Naive thymus-derived CD4-positive, alpha-beta T cell (primary cell): ENCODE measurements at regions of chr12 and their contacts with region 1.

Region 1: DNA sequence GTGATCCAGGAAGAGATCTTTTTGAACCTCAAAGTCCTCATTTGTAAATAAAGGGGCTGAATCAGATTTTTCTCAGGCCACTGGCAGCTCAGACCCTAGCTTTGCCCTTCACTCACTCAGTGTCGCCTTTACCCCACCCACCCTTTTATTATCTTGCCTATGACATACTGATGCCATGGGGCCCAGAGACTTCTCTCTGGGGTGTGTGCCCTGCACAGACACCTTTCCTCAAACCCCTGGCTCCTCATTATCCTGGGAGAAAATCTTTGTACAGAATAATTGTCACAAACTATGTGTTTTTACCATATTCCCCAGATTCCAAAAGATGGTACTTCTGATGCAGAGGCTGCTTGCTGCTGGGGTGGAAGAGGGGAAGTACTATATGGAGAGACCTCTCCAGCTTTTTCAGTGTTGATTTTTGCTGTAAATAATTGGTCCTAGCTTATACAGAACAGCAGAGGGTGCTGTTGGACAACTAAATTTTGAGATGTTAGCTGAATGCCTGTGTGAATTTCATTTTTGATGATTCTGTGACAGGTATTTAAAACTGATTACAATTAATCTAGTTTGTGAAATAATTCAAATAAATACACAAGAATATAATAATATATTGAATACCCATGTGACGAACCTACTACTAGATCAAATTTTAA is 53.9 kb upstream of the DCD start:
- DNase-seq: peak in 7 of 9 donors; percentile 16 to 67 (median 56)
- ATAC-seq: peak; percentile 81
- H3K4me3 ChIP-seq: no peak overlapping the region
- H3K4me3 Mint-ChIP-seq: no peak overlapping the region
- H3K27ac ChIP-seq: no peak overlapping the region
- H3K27ac Mint-ChIP-seq: no peak overlapping the region
- H3K4me1 ChIP-seq: no peaks in the 10 kb centered on the region
- H3K4me1 Mint-ChIP-seq: no peaks in the 10 kb centered on the region
- H3K27me3 ChIP-seq: no peaks in the 10 kb centered on the region
- H3K27me3 Mint-ChIP-seq: peaks cover 0 to 27% (median 6%) of the 10 kb centered on the region in 5 donors

Region 2: DNA sequence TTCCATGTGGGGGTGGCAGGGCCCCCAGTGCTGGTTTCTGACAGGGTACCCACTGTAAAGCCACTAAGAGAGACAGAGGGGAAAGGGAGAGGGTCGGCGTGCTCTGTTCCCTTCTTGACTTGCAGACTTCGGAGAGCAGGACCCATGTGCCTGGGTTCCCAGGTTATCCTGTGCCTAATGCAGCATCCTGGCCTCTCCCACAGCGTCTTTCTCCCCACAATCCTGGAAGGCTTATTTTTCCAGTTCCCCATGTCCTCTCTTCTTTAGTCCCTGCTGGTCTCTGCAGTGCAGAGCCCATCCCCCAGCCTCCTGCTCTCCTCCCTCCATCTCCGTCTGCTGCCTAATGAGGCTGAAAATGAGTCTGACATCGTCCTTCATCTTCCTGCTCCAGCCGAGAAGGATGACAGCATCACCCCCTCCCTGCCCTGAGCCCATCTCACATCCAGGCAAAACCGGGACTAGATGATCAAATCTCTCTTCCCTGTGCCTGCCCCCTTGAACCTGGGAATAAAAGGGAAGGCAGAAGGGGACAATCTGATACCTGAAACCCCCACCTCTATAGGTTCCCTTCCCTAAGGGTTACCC is 989.9 kb before region 1 on chr12:
- CTCF ChIA-PET with region 1: no interaction called
- POLR2A ChIA-PET with region 1: no interaction called
- intact Hi-C with region 1: no loop called
- DNase-seq: no peak
- ATAC-seq: no peak
- H3K4me3 ChIP-seq: no peak overlapping the region
- H3K4me3 Mint-ChIP-seq: no peak overlapping the region
- H3K27ac ChIP-seq: no peak overlapping the region
- H3K27ac Mint-ChIP-seq: peak overlapping the region in 2 of 9 donors; percentile 17 to 71
- H3K4me1 ChIP-seq: no peaks in the 10 kb centered on the region
- H3K4me1 Mint-ChIP-seq: peaks cover 0 to 2% (median 0%) of the 10 kb centered on the region in 7 donors
- H3K27me3 ChIP-seq: no peaks in the 10 kb centered on the region
- H3K27me3 Mint-ChIP-seq: peaks cover 0 to 20% (median 0%) of the 10 kb centered on the region in 5 donors

Region 3: GRCh38 chr12:53917126-53917653 is 784.9 kb before region 1 on chr12:
- CTCF ChIA-PET with region 1: no interaction called
- POLR2A ChIA-PET with region 1: no interaction called
- intact Hi-C with region 1: loop called in 1 of 2 experiments (anchors 5 kb)
- DNase-seq: no peak
- ATAC-seq: no peak
- H3K4me3 ChIP-seq: no peak overlapping the region
- H3K4me3 Mint-ChIP-seq: no peak overlapping the region
- H3K27ac ChIP-seq: no peak overlapping the region
- H3K27ac Mint-ChIP-seq: no peak overlapping the region
- H3K4me1 ChIP-seq: no peaks in the 10 kb centered on the region
- H3K4me1 Mint-ChIP-seq: no peaks in the 10 kb centered on the region
- H3K27me3 ChIP-seq: peaks cover 0 to 30% of the 10 kb centered on the region in 2 donors
- H3K27me3 Mint-ChIP-seq: peaks cover 66 to 83% (median 78%) of the 10 kb centered on the region in 5 donors

Region 4: DNA sequence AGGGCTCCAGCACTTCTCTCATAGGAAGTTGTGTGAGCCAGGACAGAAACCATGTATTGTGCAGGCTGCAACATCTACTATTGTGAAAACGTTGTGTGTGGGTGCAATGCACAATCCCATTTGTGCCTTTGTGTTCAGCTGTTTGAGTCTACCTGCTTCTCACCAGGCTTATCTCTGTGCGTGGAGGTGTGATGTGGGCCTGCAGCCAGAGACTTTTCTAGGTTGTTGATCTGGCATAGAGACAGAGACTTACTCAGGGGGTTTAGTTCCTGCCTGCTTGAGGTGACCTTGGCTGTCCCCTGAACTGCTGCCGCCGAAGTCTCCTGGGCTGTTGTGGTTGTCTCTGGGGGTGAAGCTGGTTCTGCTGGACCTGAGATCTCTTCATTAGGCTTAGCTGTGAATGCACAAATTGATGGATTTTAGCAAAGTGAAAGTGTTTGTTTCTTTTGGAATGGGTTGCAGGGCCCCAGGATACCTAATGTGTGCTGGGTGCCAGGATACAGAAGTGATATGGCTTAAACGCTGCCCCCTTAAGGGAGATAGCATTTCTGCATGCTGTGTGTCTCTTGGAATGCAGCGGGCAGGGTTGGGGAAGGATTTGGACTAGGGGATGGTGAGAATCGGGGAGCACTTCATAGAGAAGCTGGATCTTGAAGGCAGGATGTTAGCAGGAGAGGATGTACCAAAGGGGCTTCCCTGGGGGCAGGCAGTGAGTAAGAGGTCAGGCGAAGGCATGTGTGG is 69.9 kb before region 1 on chr12:
- CTCF ChIA-PET with region 1: no interaction called
- POLR2A ChIA-PET with region 1: no interaction called
- intact Hi-C with region 1: no loop called
- DNase-seq: no peak
- ATAC-seq: no peak
- H3K4me3 ChIP-seq: no peak overlapping the region
- H3K4me3 Mint-ChIP-seq: no peak overlapping the region
- H3K27ac ChIP-seq: no peak overlapping the region
- H3K27ac Mint-ChIP-seq: no peak overlapping the region
- H3K4me1 ChIP-seq: no peaks in the 10 kb centered on the region
- H3K4me1 Mint-ChIP-seq: no peaks in the 10 kb centered on the region
- H3K27me3 ChIP-seq: no peaks in the 10 kb centered on the region
- H3K27me3 Mint-ChIP-seq: peaks cover 9 to 39% (median 24%) of the 10 kb centered on the region in 5 donors

Region 5: GRCh38 chr12:54853995-54854566 is 152.0 kb after region 1 on chr12 and contains the start of gene MUCL1:
- CTCF ChIA-PET with region 1: interaction called, 4 read pairs
- POLR2A ChIA-PET with region 1: no interaction called
- intact Hi-C with region 1: loop called (anchors 1 kb)
- DNase-seq: peak; percentile 21 to 79 (median 73)
- ATAC-seq: peak; percentile 99
- H3K4me3 ChIP-seq: no peak within 1 kb of the TSS
- H3K4me3 Mint-ChIP-seq: no peak within 1 kb of the TSS
- H3K27ac ChIP-seq: no peak within 1 kb of the TSS
- H3K27ac Mint-ChIP-seq: peak within 1 kb of the TSS in 2 of 9 donors; percentile 44 to 70
- H3K4me1 ChIP-seq: no peaks in the 10 kb centered on the region
- H3K4me1 Mint-ChIP-seq: peaks cover 0 to 12% (median 5%) of the 10 kb centered on the region in 7 donors
- H3K27me3 ChIP-seq: no peaks in the 10 kb centered on the region
- H3K27me3 Mint-ChIP-seq: peaks cover 0 to 4% (median 0%) of the 10 kb centered on the region in 5 donors
- total RNA-seq, gene MUCL1: not detected

Region 6: GRCh38 chr12:55001198-55001868 is 299.3 kb after region 1 on chr12:
- CTCF ChIA-PET with region 1: interaction called, 16 read pairs
- POLR2A ChIA-PET with region 1: no interaction called
- intact Hi-C with region 1: no loop called
- DNase-seq: no peak
- ATAC-seq: peak; percentile 59
- H3K4me3 ChIP-seq: no peak overlapping the region
- H3K4me3 Mint-ChIP-seq: peak overlapping the region in 8 of 10 donors; percentile 1 to 81 (median 59)
- H3K27ac ChIP-seq: peak overlapping the region; percentile 11
- H3K27ac Mint-ChIP-seq: peak overlapping the region in 8 of 9 donors; percentile 53 to 83 (median 72)
- H3K4me1 ChIP-seq: peaks cover 0 to 16% of the 10 kb centered on the region in 2 donors
- H3K4me1 Mint-ChIP-seq: peaks cover 8 to 33% (median 21%) of the 10 kb centered on the region in 7 donors
- H3K27me3 ChIP-seq: no peaks in the 10 kb centered on the region
- H3K27me3 Mint-ChIP-seq: peaks cover 0 to 5% (median 0%) of the 10 kb centered on the region in 5 donors

Region 7: DNA sequence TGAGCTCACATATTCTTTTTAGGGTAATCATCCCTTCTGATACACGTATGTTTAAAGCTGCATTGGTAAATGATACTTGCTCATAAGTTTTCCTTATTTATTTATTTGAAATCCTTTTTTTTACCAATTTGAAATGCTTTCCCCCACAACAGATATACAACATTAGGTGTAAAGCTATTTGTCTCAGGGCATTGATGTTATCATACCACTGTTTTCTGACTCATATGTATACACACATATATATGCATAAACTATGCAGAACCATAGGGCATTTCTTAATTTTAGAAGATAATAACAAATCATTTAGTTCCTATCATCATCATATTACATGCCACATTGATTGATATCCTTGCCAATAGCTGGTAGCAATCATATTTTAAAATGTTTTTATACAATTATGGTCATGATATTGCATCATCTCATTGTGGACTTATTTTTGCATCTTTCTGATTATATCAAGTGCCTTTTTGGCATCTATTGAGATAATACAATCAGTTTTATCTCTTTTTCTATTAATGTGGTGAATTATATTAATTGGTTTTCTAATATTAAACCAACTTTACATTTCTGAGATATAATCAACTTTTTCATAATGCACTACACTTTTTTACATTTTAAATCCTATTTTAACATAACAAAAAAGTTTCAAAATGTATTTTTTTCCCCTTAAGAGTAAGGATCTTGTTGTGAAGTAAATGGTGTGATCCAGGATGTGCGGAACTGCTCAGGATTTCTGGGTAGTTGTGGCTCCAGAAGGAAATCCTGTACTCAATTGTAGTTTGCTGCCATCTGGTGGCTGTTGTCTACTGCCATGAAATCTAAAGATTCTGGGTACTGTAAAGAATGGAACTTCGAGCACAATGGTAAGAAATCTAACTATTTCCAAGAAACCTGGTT is 440.9 kb after region 1 on chr12:
- CTCF ChIA-PET with region 1: interaction called, 19 read pairs
- POLR2A ChIA-PET with region 1: no interaction called
- intact Hi-C with region 1: loop called in 1 of 2 experiments (anchors 1 kb)
- DNase-seq: peak in 6 of 9 donors; percentile 10 to 41 (median 20)
- ATAC-seq: peak; percentile 29
- H3K4me3 ChIP-seq: no peak overlapping the region
- H3K4me3 Mint-ChIP-seq: no peak overlapping the region
- H3K27ac ChIP-seq: no peak overlapping the region
- H3K27ac Mint-ChIP-seq: no peak overlapping the region
- H3K4me1 ChIP-seq: no peaks in the 10 kb centered on the region
- H3K4me1 Mint-ChIP-seq: peaks cover 0 to 6% (median 0%) of the 10 kb centered on the region in 7 donors
- H3K27me3 ChIP-seq: no peaks in the 10 kb centered on the region
- H3K27me3 Mint-ChIP-seq: peaks cover 0 to 35% (median 0%) of the 10 kb centered on the region in 5 donors

Region 8: DNA sequence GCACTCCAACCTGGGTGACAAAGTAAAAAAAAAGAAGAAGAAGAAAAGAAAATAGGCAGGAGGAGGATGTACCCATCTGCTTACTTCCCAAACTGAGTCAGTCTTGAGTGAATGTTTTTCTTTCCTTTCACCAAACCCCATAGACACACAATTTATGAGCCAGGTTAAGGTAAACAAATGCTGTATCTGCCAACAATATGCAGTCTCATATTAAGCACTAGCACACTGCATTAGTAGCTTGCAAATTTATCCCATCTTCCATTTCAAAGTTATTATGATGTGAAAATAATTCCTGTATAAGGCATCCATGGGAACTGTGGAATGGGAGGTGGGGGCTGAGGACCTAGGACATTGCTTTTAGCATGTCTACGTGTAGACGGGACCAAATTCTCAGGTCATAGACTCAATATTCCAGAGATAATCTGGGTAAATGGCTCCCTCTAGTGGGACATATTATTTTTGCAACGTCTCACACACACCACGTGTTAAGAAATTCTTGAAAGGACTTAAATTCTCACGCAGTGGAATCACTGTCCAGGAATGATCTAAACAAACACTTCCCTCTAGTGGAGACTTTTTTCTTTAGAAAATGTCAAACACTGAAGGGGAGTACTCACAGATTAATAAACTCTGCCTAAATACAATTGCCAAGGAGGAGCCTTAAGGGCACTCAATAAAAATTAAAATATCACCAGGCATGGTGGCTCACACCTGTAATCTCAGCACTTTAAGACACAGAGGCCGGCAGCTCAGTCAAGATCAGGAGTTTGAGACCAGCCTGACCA is 917.5 kb after region 1 on chr12:
- CTCF ChIA-PET with region 1: no interaction called
- POLR2A ChIA-PET with region 1: no interaction called
- intact Hi-C with region 1: loop called in 1 of 2 experiments (anchors 1 kb)
- DNase-seq: peak in 7 of 9 donors; percentile 49 to 74 (median 69)
- ATAC-seq: peak; percentile 95
- H3K4me3 ChIP-seq: no peak overlapping the region
- H3K4me3 Mint-ChIP-seq: no peak overlapping the region
- H3K27ac ChIP-seq: no peak overlapping the region
- H3K27ac Mint-ChIP-seq: no peak overlapping the region
- H3K4me1 ChIP-seq: no peaks in the 10 kb centered on the region
- H3K4me1 Mint-ChIP-seq: peaks cover 0 to 6% (median 0%) of the 10 kb centered on the region in 7 donors
- H3K27me3 ChIP-seq: no peaks in the 10 kb centered on the region
- H3K27me3 Mint-ChIP-seq: peaks cover 19 to 46% (median 36%) of the 10 kb centered on the region in 5 donors